ENCODE measurements at regions of chr1 and their contacts with region 1.

Region 1: DNA sequence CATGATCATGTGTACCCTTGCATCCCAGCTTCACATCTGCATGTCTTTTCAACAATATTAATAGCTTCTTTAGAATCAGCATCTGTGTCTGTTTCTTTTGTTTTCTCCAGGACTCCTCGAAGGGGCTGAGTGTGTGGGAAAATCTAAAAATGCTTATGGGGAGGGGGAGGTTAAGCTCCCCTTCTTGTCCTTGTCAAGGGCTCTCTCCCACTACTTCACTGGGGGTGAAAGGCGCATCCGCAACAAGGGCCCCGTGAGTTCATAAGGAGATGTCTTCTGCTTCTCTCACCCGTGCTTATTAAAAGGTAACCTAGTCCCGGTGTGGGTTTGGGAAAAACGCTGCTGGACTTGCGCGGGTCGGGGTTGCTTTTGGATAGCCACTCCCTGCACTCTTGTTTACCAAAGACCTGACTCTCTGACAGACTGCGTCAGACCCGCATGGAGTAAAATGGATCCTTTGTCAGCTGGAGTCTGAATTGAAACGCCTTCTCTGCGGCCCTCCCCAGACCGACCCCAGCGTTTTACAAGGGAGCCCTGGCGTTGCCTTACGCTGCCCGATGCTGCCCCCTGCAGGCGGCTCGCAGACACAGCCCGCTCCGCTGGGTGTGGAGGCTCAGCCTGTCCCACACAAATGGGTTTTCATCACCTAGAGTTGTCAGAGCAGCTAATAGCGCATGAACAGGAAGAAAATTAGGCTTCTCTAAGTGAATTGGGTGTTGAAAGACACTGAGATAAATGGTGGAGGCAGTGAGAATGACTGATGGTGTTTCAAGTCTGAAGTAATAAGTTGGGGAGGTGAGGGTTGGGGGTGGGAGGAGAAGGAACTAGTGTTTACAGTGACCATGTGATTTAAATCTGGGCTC is 53.8 kb downstream of the IER5 start:
- DNase-seq: peak; percentile 81 to 92
- ATAC-seq: peak; percentile 89 to 96
- H3K4me3 ChIP-seq: peak overlapping the region; percentile 19
- H3K27ac ChIP-seq: peak overlapping the region; percentile 77 to 92
- H3K4me1 ChIP-seq: peaks cover 36% of the 10 kb centered on the region
- CTCF ChIP-seq: peak; percentile 96
- EP300 ChIP-seq: no peak
- POLR2A ChIP-seq: no peak
- RAD21 ChIP-seq: peak; percentile 100

Region 2: DNA sequence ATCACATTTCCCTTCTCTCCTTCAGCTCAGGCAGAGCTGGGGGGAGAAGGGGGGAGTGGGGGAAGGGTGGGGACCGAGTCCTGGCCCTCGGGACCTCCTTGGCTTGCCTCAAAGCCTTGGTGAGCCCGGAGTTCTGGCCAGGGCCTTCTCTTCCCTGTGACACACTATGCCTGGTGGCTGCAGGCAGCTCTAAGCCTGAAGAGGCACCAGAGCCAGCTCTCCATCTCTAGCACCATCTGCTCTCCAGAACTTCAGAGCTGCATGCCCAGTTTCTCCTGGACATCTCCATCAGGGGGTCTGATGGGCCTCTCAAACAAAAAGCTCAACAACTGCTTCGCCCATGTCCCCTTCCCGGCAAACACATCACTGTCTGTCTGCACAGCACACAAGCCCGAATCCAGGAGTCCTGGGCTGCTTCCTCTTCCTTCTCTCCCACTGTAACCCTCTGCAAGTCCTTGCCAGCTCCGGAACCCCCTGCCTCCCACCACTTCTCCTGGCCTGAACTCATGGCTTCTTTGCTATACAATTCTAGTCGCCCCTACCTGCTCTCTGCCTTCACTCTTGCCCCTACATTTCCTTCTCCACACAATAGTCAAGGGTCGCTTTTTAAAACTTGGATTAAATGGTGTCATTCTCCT is 203.1 kb before region 1 on chr1:
- CTCF ChIA-PET with region 1: interaction called, 11 read pairs
- POLR2A ChIA-PET with region 1: no interaction called
- DNase-seq: no peak
- ATAC-seq: peak in 1 of 2 experiments; percentile 20; a peak in 3 of 6 replicates
- H3K4me3 ChIP-seq: no peak overlapping the region
- H3K27ac ChIP-seq: no peak overlapping the region
- H3K4me1 ChIP-seq: no peaks in the 10 kb centered on the region
- CTCF ChIP-seq: no peak
- EP300 ChIP-seq: no peak
- POLR2A ChIP-seq: no peak
- RAD21 ChIP-seq: no peak

Region 3: GRCh38 chr1:180982422-180982821 is 159.9 kb before region 1 on chr1:
- CTCF ChIA-PET with region 1: interaction called, 11 read pairs
- POLR2A ChIA-PET with region 1: no interaction called
- DNase-seq: no peak
- ATAC-seq: no peak
- H3K4me3 ChIP-seq: no peak overlapping the region
- H3K27ac ChIP-seq: no peak overlapping the region
- H3K4me1 ChIP-seq: no peaks in the 10 kb centered on the region
- CTCF ChIP-seq: no peak
- EP300 ChIP-seq: no peak
- POLR2A ChIP-seq: no peak
- RAD21 ChIP-seq: no peak

Region 4: GRCh38 chr1:181033799-181034451 is 108.4 kb before region 1 on chr1 and contains the start of gene MR1:
- CTCF ChIA-PET with region 1: interaction called, 55 read pairs
- POLR2A ChIA-PET with region 1: no interaction called
- DNase-seq: peak; percentile 71 to 84
- ATAC-seq: peak; percentile 93 to 96
- H3K4me3 ChIP-seq: peak within 1 kb of the TSS; percentile 43
- H3K27ac ChIP-seq: peak within 1 kb of the TSS; percentile 69 to 84
- H3K4me1 ChIP-seq: peaks cover 13% of the 10 kb centered on the region; the same call in 2 of the 3 replicates
- CTCF ChIP-seq: no peak
- EP300 ChIP-seq: no peak
- POLR2A ChIP-seq: no peak
- RAD21 ChIP-seq: no peak
- polyA plus RNA-seq, gene MR1: 17.2 and 20.8 TPM in 2 replicates

Region 5: GRCh38 chr1:181105134-181106021 is 36.9 kb before region 1 on chr1:
- CTCF ChIA-PET with region 1: interaction called, 774 read pairs
- POLR2A ChIA-PET with region 1: interaction called, 12 read pairs
- DNase-seq: peak; percentile 84 to 90
- ATAC-seq: peak; percentile 75 to 81
- H3K4me3 ChIP-seq: peak overlapping the region; percentile 65
- H3K27ac ChIP-seq: peak overlapping the region; percentile 98 to 99
- H3K4me1 ChIP-seq: peaks cover 89% of the 10 kb centered on the region
- CTCF ChIP-seq: no peak
- EP300 ChIP-seq: peak in 1 of 2 experiments; percentile 28; a peak in 1 of 5 replicates
- POLR2A ChIP-seq: peak; percentile 47; the same call in 1 of the 2 replicates
- RAD21 ChIP-seq: no peak; a peak in 1 of 5 replicates

Region 6: DNA sequence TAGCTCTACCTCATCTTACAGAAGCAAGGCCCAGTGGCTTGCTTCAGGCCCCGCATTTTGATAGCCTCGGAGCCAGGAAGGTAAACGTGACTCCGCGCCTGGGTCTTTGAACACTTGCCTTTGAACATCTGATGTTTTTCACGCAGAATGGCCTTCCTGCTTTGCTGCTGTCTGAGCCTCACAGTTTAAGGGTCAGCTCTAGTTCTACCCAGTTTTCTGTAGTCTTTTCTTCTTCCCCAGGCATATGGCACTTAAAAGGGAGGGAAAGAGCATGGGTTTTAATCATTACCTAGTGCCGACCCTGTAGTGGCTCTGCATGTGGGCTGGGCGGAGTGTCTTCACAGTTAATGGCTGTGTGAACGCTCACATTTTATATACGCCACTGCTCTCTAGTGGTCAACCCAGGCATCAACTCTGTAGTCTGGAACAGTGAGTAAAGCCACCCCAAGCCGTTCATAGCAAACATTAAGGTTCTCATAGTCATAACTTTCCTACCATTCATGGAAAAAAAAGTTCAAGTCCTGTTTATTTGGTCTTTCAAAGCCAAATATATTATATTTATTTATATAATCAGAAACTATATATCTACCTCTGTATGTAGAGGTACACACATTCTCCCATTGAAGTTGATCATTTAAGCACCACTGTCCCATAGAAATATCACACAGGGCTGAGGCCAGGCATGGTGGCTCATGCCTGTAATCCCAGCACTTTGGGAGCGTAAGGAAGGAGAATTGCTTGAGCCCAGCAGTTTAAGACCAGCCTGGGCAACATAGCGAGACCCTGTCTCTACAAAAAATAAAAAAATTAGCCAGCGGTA is 24.3 kb after region 1 on chr1:
- CTCF ChIA-PET with region 1: interaction called, 37 read pairs
- POLR2A ChIA-PET with region 1: no interaction called
- DNase-seq: peak; percentile 72 to 80
- ATAC-seq: peak; percentile 96 to 100
- H3K4me3 ChIP-seq: no peak overlapping the region
- H3K27ac ChIP-seq: peak overlapping the region in 1 of 2 experiments; percentile 52; a peak in 1 of 6 replicates
- H3K4me1 ChIP-seq: no peaks in the 10 kb centered on the region
- CTCF ChIP-seq: peak; percentile 95
- EP300 ChIP-seq: no peak
- POLR2A ChIP-seq: no peak
- RAD21 ChIP-seq: peak; percentile 83 to 97